ENCODE measurements at regions of chr11 and their contacts with region 1.

Region 1: DNA sequence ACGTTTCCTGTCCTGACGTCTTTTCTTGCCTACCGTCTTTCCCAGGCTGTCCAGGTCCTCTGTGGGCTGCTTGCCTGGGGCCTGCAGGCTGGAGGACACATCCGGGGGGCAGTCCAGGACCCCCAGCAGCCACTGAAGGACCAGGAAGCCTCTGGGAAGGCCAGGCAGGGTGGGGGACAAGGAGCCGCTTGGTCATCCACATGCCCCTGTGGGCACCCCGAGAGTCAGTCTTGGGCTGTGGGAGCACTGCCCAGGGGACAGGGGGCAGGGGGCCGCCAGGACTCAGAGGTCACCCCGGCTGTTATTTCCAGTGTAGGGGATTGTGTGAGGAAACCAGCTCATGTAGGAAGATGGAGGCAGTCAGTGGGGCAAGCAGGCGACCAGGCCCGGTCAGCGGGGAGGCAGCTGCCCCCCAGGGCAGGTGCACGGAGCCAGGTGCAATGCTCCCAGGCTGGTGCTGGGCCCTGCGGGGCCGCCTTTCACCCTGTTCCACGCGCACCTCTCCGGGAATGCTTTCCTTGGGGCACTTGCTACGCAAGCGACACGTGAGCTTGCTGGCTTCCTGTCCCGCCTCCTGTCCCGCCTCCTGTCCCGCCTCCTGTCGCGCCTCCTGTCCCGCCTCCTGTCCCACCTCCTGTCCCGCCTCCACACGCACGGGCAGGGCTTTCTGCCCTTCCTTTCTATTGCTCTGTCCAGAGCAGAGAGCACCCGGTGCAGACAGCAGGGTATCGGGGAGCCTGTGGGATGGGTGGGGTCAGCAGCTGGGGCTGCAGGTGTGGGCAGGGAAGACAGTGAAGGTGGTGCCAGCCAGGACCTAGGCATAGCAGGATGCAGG is 39.5 kb downstream of the MUC5B start:
- DNase-seq: peak; percentile 86 to 91
- ATAC-seq: peak; percentile 84 to 94
- H3K4me3 ChIP-seq: peak overlapping the region; percentile 58 to 69 (median 64)
- H3K27ac ChIP-seq: peak overlapping the region; percentile 79 to 87 (median 83)
- H3K4me1 ChIP-seq: peaks cover 4 to 18% of the 10 kb centered on the region in 2 donors
- H3K27me3 ChIP-seq: no peaks in the 10 kb centered on the region
- CTCF ChIP-seq: no peak
- POLR2A ChIP-seq: peak; percentile 50 to 52

Region 2: GRCh38 chr11:809287-810039 is 452.9 kb before region 1 on chr11 and contains the start of gene RPLP2:
- in situ Hi-C with region 1: no loop called
- intact Hi-C with region 1: no loop called
- DNase-seq: peak; percentile 97 to 98
- ATAC-seq: peak; percentile 83 to 85
- H3K4me3 ChIP-seq: peak within 1 kb of the TSS; percentile 66 to 97 (median 78)
- H3K27ac ChIP-seq: peak within 1 kb of the TSS; percentile 97 to 100 (median 100)
- H3K4me1 ChIP-seq: peaks cover 38 to 41% of the 10 kb centered on the region in 2 donors
- H3K27me3 ChIP-seq: no peaks in the 10 kb centered on the region
- CTCF ChIP-seq: peak in 1 of 5 experiments; percentile 10
- POLR2A ChIP-seq: peak; percentile 90 to 95
- total RNA-seq, gene RPLP2: 314 to 600 (median 440) TPM

Region 3: GRCh38 chr11:1389103-1389931 is 126.9 kb after region 1 on chr11:
- in situ Hi-C with region 1: no loop called
- intact Hi-C with region 1: loop called (anchors 10 kb)
- DNase-seq: peak; percentile 94
- ATAC-seq: peak; percentile 96 to 98
- H3K4me3 ChIP-seq: peak overlapping the region; percentile 44 to 67 (median 50)
- H3K27ac ChIP-seq: peak overlapping the region in 1 of 4 donors; percentile 16
- H3K4me1 ChIP-seq: peaks cover 4 to 8% of the 10 kb centered on the region in 2 donors
- H3K27me3 ChIP-seq: peaks cover 45 to 50% (median 48%) of the 10 kb centered on the region in 3 donors
- CTCF ChIP-seq: peak in 1 of 5 experiments; percentile 32
- POLR2A ChIP-seq: no peak